Vagina (tissue), 2 donors: ENCODE measurements at regions of chrX and their contacts with region 1.

Region 1: DNA sequence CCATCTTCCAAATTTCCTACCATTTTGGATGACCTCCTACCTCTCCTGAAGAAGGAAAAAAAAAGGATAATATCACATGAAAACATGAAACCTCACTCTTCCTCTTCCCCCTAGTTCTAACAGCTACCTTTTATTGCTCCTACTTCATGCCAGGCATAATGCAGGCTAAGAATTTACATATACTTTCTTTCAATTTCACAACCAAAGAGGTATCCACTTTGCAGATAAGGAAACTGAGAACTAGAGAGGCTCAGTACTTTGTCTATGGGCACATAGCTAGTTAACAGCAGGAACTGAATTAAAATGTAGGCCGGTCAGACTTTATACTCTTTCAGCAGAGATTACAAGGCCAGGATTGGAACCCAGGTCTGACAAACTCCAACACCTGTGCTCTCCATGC is 34.4 kb upstream of the BEND2 start:
- DNase-seq: no peak
- H3K4me3 ChIP-seq: no peak overlapping the region
- H3K27ac ChIP-seq: no peak overlapping the region
- H3K4me1 ChIP-seq: no peaks in the 10 kb centered on the region
- H3K27me3 ChIP-seq: no peaks in the 10 kb centered on the region
- CTCF ChIP-seq: no peak
- POLR2A ChIP-seq: no peak

Region 2: GRCh38 chrX:18194688-18195087 is 60.4 kb before region 1 on chrX:
- intact Hi-C with region 1: loop called (anchors 2 kb)
- DNase-seq: no peak
- H3K4me3 ChIP-seq: no peak overlapping the region
- H3K27ac ChIP-seq: no peak overlapping the region
- H3K4me1 ChIP-seq: no peaks in the 10 kb centered on the region
- H3K27me3 ChIP-seq: no peaks in the 10 kb centered on the region
- CTCF ChIP-seq: no peak
- POLR2A ChIP-seq: no peak